A673 (cell line): ENCODE measurements at regions of chr1 and their contacts with region 1.

Region 1: DNA sequence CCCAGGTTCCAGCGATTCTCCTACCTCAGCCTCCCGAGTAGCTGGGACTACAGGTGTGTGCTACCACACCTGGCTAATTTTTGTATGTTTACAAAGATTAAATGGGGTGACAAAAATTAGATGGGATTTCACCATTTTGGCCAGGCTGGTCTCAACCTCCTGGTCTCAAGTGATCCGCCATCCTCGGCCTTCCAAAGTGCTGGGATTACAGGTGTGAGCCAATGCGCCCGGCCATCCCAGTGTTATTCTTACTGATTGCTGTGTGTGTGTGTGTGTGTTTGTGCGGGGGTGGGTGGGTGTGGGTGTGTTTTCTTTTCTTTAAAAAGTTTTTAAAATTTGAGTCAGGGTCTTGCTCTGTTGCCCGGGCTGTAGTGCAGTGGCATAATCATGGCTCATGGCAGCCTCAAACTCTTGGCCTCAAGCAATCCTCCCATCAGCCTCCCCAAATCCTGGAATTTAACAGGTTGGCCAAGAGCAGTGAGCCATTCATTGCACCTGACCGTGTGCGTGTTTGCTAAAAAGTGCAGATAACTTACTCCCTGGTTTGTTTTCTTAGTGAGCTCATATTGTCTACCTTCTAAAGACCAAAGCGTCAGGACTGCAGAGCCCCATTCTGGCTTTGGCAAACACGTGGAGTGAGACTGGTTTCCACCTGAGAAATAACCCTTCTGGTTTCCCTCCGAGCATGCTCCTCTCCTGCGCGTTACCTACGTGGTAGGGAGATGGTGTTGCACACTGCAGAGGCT is 32.4 kb upstream of the CA6 start:
- DNase-seq: no peak
- H3K4me3 ChIP-seq: no peak overlapping the region
- H3K27ac ChIP-seq: no peak overlapping the region
- H3K4me1 ChIP-seq: no peaks in the 10 kb centered on the region
- H3K27me3 ChIP-seq: no peaks in the 10 kb centered on the region
- CTCF ChIP-seq: no peak

Region 2: GRCh38 chr1:8987881-8988617 is 74.8 kb after region 1 on chr1:
- CTCF ChIA-PET with region 1: interaction called, 10 read pairs
- POLR2A ChIA-PET with region 1: no interaction called
- intact Hi-C with region 1: loop called (anchors 1 kb)
- DNase-seq: peak; percentile 56
- H3K4me3 ChIP-seq: no peak overlapping the region
- H3K27ac ChIP-seq: no peak overlapping the region
- H3K4me1 ChIP-seq: no peaks in the 10 kb centered on the region
- H3K27me3 ChIP-seq: no peaks in the 10 kb centered on the region
- CTCF ChIP-seq: peak; percentile 96

Region 3: GRCh38 chr1:9101510-9102146 is 188.3 kb after region 1 on chr1:
- CTCF ChIA-PET with region 1: interaction called, 8 read pairs
- POLR2A ChIA-PET with region 1: no interaction called
- intact Hi-C with region 1: loop called (anchors 5 kb)
- DNase-seq: peak; percentile 53
- H3K4me3 ChIP-seq: no peak overlapping the region
- H3K27ac ChIP-seq: no peak overlapping the region
- H3K4me1 ChIP-seq: no peaks in the 10 kb centered on the region
- H3K27me3 ChIP-seq: no peaks in the 10 kb centered on the region
- CTCF ChIP-seq: peak; percentile 65